Spleen (tissue), 13 donors: ENCODE measurements at regions of chr1 and their contacts with region 1.

Region 1: DNA sequence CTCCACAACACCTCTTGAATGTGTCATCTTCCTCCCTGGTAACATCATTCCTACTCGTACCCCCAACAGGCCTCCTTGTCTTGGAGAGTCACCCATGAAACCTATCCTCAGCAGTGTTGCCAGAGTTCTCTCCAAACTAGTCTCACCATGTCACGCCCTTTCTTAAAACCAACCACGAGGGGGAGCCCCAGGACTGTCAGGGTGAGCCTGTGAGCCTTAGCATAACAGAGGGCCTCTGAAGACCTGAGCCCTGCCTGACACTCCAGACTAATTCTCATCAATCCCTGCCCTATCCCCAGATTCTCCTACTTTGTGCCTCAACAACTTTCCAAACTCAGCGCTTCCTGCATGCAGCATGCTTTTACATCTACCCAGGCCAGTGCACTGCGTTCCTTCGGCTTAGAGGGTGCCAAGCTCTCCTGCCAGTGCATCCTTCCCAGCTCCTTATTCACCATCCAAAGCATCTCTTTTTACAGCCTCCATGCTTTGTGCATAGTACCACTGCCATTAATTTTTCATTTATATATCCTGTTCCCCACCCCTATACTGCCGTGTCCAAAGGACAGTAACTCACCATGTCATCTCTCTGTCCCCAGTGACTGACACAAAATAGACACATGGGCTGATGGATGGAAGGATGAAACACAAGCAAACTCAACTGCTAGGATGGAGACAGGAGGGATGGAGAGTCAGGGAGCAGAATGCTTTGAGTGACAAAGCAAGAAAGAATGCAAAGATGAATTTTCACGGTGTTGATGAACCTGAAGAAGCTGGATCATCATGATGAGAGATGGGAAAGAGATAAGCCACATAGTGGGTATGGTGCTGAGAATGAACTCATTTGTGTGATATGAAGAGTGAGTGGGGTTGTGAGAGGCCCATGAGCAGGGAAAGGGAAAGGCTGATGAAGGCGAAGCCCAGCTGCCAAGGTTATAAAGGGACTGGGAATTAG is 34.0 kb downstream of the ZNF697 start:
- DNase-seq: peak; percentile 82
- H3K4me3 ChIP-seq: no peak overlapping the region
- H3K27ac ChIP-seq: no peak overlapping the region
- H3K4me1 ChIP-seq: peaks cover 0 to 6% (median 0%) of the 10 kb centered on the region in 6 donors
- H3K27me3 ChIP-seq: peaks cover 0 to 3% (median 0%) of the 10 kb centered on the region in 7 donors
- CTCF ChIP-seq: peak in 10 of 11 experiments; percentile 37 to 80 (median 68)
- POLR2A ChIP-seq: no peak

Region 2: DNA sequence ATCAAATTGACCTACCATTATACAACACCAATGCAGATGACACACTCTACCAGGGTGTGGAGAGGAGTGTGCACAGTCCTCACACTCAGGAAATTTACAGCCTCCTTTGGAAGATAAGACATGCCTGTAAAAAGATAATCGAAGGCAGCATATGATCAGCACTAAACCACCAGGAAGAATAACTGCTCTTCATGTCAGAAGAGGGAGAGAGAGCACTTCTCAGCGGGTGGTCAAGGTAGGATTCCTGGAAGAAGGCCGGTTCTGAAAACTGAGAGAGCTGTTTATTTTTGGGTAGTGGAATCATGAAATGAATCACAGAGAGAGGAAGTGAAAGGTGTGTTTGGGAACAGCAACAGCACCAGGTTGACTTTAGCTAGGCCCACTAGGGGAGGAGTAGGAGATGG is 48.0 kb after region 1 on chr1:
- intact Hi-C with region 1: loop called (anchors 5 kb)
- DNase-seq: no peak
- H3K4me3 ChIP-seq: no peak overlapping the region
- H3K27ac ChIP-seq: no peak overlapping the region
- H3K4me1 ChIP-seq: no peaks in the 10 kb centered on the region
- H3K27me3 ChIP-seq: no peaks in the 10 kb centered on the region
- CTCF ChIP-seq: no peak
- POLR2A ChIP-seq: no peak

Region 3: GRCh38 chr1:119675349-119676345 is 61.6 kb after region 1 on chr1:
- intact Hi-C with region 1: loop called (anchors 5 kb)
- DNase-seq: no peak
- H3K4me3 ChIP-seq: peak overlapping the region in 7 of 8 donors; percentile 17 to 64 (median 26)
- H3K27ac ChIP-seq: peak overlapping the region in 2 of 8 donors; percentile 34 to 42
- H3K4me1 ChIP-seq: peaks cover 0 to 12% (median 9%) of the 10 kb centered on the region in 6 donors
- H3K27me3 ChIP-seq: peaks cover 0 to 16% (median 0%) of the 10 kb centered on the region in 7 donors
- CTCF ChIP-seq: peak; percentile 48 to 86 (median 78)
- POLR2A ChIP-seq: no peak